ENCODE measurements at regions of chr22 and their contacts with region 1.

Region 1: DNA sequence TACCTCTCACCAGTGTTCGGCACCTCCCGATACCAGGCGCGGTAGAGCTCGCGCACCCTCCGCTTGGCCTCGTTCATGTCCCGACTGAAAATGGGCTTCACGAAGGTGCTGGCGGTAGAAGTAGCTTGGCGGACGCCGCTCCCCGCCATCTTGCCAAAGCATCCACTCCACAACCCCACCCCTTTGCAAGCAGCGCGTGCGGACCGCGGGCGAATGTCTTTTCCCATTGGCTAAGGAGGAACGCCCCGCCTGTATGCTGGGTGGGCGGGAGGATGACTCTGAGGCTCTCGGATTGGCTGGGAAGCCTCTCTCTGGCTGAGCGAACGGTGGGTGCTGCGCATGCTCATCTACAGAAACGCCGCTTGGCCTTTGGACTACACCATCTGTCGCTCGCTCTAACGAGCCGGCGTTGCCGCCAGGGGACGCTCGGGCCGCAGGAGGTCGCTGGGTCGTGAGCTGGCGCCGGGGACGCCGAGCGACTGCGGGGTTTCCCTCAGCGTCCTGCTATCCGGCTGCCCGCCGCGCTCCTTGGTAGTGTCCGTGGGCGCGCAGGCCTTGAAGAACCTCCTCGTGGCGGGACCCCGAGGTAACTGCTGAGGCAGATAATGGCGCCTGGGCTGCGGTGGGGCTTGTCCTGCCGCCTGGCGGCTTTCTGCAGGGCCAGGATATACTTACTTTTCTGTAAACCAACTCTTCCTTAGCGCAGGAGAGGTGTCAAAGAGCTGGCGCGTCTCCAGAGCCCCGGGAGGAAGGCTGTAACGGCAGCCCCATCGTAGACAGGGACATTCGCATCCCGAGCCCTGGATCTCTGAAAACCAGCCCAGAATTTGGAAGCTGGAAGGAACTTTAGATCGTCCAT is at the start of gene NDUFA6:
- DNase-seq: peak; percentile 92 to 99 (median 98)
- ATAC-seq: peak; percentile 93
- H3K4me3 ChIP-seq: peak within 1 kb of the TSS; percentile 96
- H3K4me3 Mint-ChIP-seq: peak within 1 kb of the TSS; percentile 94 to 99 (median 98)
- H3K27ac ChIP-seq: peak within 1 kb of the TSS; percentile 96
- H3K27ac Mint-ChIP-seq: peak within 1 kb of the TSS; percentile 92 to 100 (median 99)
- H3K4me1 ChIP-seq: peaks cover 15 to 22% of the 10 kb centered on the region in 2 donors
- H3K4me1 Mint-ChIP-seq: peaks cover 14 to 56% (median 36%) of the 10 kb centered on the region in 7 donors
- H3K27me3 ChIP-seq: no peaks in the 10 kb centered on the region
- H3K27me3 Mint-ChIP-seq: no peaks in the 10 kb centered on the region
- total RNA-seq, gene NDUFA6: 35.0 to 66.4 (median 40.6) TPM

Region 2: DNA sequence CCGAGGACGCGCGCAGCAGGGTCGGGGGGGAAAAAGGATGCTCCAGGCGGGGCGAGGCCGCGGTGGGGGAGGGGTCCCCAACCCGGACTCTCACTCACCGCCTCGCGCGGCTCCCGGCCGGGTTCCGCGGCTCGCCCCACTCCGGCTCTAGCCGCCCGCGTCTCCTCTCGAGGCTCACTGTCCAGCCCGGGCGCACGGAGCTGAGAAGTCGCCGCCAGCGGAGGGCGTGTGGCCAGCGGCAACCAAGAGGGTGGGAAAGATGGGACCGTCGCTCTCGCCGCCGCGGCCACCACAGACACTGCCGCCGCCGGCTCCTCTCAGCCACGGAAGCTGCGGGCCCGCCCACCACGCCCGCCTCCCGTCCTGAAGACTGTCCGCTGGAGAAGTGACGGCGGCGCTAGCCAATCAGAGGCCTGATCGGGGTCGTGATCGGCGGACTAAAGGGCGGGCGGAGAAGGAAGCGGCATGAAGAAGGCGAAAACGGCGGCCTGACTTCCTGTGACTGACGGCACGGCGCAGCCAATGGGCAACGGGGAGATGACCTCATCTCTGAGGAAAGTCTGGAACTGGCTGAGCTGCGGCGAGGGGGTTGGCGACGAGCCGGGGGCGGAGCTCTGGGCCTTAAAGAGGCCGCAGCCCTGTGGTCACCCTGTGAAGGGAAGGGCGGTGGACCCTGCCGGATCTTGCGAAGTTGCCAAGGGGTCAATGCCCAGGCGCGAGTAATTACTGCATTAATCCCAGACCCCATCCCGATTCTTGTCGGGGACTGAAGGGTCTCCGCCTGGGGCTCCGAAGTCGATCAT is 1454.2 kb before region 1 on chr22 and contains the start of gene MRTFA:
- CTCF ChIA-PET with region 1: no interaction called
- POLR2A ChIA-PET with region 1: no interaction called
- intact Hi-C with region 1: loop called in 1 of 2 experiments (anchors 2 kb)
- DNase-seq: peak; percentile 90 to 99 (median 98)
- ATAC-seq: peak; percentile 96
- H3K4me3 ChIP-seq: peak within 1 kb of the TSS; percentile 84
- H3K4me3 Mint-ChIP-seq: peak within 1 kb of the TSS; percentile 94 to 100 (median 97)
- H3K27ac ChIP-seq: peak within 1 kb of the TSS; percentile 85
- H3K27ac Mint-ChIP-seq: peak within 1 kb of the TSS; percentile 96 to 99 (median 97)
- H3K4me1 ChIP-seq: peaks cover 14 to 27% of the 10 kb centered on the region in 2 donors
- H3K4me1 Mint-ChIP-seq: peaks cover 27 to 56% (median 44%) of the 10 kb centered on the region in 7 donors
- H3K27me3 ChIP-seq: no peaks in the 10 kb centered on the region
- H3K27me3 Mint-ChIP-seq: no peaks in the 10 kb centered on the region
- total RNA-seq, gene MRTFA: 64.0 to 114 (median 104) TPM

Region 3: GRCh38 chr22:41848468-41848867 is 242.4 kb before region 1 on chr22:
- CTCF ChIA-PET with region 1: no interaction called
- POLR2A ChIA-PET with region 1: no interaction called
- intact Hi-C with region 1: no loop called
- DNase-seq: no peak
- ATAC-seq: peak; percentile 79
- H3K4me3 ChIP-seq: no peak overlapping the region
- H3K4me3 Mint-ChIP-seq: no peak overlapping the region
- H3K27ac ChIP-seq: no peak overlapping the region
- H3K27ac Mint-ChIP-seq: peak overlapping the region in 2 of 9 donors; percentile 27 to 51
- H3K4me1 ChIP-seq: peaks cover 4 to 10% of the 10 kb centered on the region in 2 donors
- H3K4me1 Mint-ChIP-seq: peaks cover 32 to 52% (median 47%) of the 10 kb centered on the region in 7 donors
- H3K27me3 ChIP-seq: no peaks in the 10 kb centered on the region
- H3K27me3 Mint-ChIP-seq: no peaks in the 10 kb centered on the region

Region 4: GRCh38 chr22:42070517-42071422 is 20.1 kb before region 1 on chr22 and contains the start of gene NAGA:
- CTCF ChIA-PET with region 1: interaction called, 6 read pairs
- POLR2A ChIA-PET with region 1: interaction called, 21 read pairs
- intact Hi-C with region 1: loop called (anchors 1 kb)
- DNase-seq: peak; percentile 79 to 91 (median 88)
- ATAC-seq: peak; percentile 99
- H3K4me3 ChIP-seq: peak within 1 kb of the TSS; percentile 75
- H3K4me3 Mint-ChIP-seq: peak within 1 kb of the TSS; percentile 86 to 96 (median 94)
- H3K27ac ChIP-seq: peak within 1 kb of the TSS; percentile 75
- H3K27ac Mint-ChIP-seq: peak within 1 kb of the TSS; percentile 81 to 94 (median 92)
- H3K4me1 ChIP-seq: peaks cover 16 to 22% of the 10 kb centered on the region in 2 donors
- H3K4me1 Mint-ChIP-seq: peaks cover 22 to 54% (median 45%) of the 10 kb centered on the region in 7 donors
- H3K27me3 ChIP-seq: no peaks in the 10 kb centered on the region
- H3K27me3 Mint-ChIP-seq: no peaks in the 10 kb centered on the region
- total RNA-seq, gene NAGA: 7.6 to 38.8 (median 9.4) TPM

Region 5: GRCh38 chr22:42169055-42169469 is 78.2 kb after region 1 on chr22:
- CTCF ChIA-PET with region 1: interaction called, 3 read pairs
- POLR2A ChIA-PET with region 1: no interaction called
- intact Hi-C with region 1: loop called in 1 of 2 experiments (anchors 2 kb)
- DNase-seq: peak; percentile 36 to 77 (median 60)
- ATAC-seq: peak; percentile 89
- H3K4me3 ChIP-seq: no peak overlapping the region
- H3K4me3 Mint-ChIP-seq: no peak overlapping the region
- H3K27ac ChIP-seq: no peak overlapping the region
- H3K27ac Mint-ChIP-seq: peak overlapping the region in 1 of 9 donors; percentile 31
- H3K4me1 ChIP-seq: peaks cover 0 to 15% of the 10 kb centered on the region in 2 donors
- H3K4me1 Mint-ChIP-seq: peaks cover 13 to 39% (median 33%) of the 10 kb centered on the region in 7 donors
- H3K27me3 ChIP-seq: no peaks in the 10 kb centered on the region
- H3K27me3 Mint-ChIP-seq: no peaks in the 10 kb centered on the region

Region 6: DNA sequence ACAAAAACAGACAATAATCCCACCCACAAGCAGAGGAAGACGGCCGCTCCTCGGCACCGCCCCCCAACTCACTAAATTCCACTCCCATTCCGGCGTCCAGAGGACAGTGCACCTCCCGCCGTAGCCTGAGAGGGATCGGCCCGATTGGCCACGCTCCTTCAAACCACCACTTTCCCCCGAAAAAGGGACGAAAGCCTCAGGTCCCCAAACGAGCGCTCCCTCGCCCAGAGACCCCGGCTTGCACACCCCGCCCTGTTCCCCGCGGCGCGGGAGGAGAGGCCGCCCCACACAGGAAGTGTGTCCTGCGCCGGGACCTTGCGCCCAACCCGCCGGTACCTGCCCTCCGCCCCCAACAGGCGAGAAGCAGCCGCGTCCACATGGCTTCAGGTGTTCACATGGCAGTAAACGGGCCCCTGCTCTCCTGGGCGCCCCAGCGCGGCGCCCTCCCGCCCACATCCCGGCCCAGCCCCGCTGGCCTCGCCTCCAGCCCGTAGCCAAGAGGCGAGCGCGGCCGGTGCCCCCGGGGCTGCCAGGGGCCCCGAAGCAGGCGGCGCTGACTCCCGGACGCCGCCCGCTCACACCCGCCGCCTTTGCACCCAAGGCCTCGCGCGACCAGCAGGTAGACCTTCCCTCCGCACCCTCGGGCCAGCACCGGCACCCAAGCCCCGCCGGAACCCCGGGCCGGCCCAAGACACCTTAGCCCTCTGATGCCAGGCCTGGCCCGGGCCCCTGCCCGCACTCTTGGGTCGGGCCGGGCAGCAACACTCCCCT is 178.8 kb after region 1 on chr22:
- CTCF ChIA-PET with region 1: interaction called, 3 read pairs
- POLR2A ChIA-PET with region 1: interaction called, 3 read pairs
- intact Hi-C with region 1: loop called (anchors 1 kb)
- DNase-seq: peak; percentile 37 to 74 (median 65)
- ATAC-seq: peak; percentile 64
- H3K4me3 ChIP-seq: peak overlapping the region; percentile 86
- H3K4me3 Mint-ChIP-seq: peak overlapping the region; percentile 86 to 98 (median 92)
- H3K27ac ChIP-seq: peak overlapping the region; percentile 97
- H3K27ac Mint-ChIP-seq: peak overlapping the region; percentile 79 to 95 (median 88)
- H3K4me1 ChIP-seq: peaks cover 28% of the 10 kb centered on the region in 2 donors
- H3K4me1 Mint-ChIP-seq: peaks cover 35 to 56% (median 43%) of the 10 kb centered on the region in 7 donors
- H3K27me3 ChIP-seq: no peaks in the 10 kb centered on the region
- H3K27me3 Mint-ChIP-seq: no peaks in the 10 kb centered on the region

Region 7: DNA sequence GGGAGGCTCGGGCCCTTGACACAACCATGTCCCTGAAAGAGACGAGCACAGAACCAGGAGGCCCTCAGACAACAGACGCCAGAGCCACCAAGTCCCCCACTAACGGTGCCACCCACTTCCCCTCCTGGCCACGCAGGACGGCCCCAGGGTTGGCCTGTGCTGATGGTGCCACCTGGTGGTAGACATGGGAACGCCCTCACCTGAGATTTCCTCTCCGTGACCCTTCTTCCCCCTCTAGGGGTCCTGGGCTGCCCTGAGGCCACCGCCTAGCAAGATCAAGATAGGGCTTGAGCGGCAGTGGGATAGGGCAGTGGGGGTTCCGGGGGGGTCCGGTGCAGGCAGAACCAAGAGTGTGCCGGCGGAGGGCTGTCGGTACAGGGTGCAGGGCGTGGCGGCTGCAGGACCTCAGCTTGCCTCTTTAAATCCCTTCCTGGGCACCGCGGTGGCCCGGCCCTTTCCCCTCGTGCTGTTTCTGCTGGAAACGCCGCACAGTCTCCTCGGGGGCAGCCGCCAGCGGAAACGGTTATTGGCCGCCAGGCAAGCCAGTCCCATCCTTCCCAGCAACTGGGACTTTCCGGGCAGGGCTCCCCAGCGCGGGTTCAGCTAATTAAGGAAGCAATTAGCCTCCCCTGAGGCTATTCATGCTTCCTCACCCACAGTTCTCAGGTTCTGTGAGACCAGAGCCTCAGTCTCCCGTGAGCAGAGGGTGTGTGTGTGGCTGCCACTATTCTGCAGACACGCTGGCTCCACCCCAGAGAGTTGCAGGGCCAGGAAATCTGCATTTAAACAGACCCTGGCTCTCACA is 346.9 kb after region 1 on chr22:
- CTCF ChIA-PET with region 1: interaction called, 10 read pairs
- POLR2A ChIA-PET with region 1: interaction called, 20 read pairs
- intact Hi-C with region 1: loop called (anchors 1 kb)
- DNase-seq: peak; percentile 71 to 90 (median 81)
- ATAC-seq: peak; percentile 96
- H3K4me3 ChIP-seq: peak overlapping the region; percentile 67
- H3K4me3 Mint-ChIP-seq: peak overlapping the region; percentile 65 to 88 (median 74)
- H3K27ac ChIP-seq: no peak overlapping the region
- H3K27ac Mint-ChIP-seq: peak overlapping the region in 4 of 9 donors; percentile 48 to 87 (median 78)
- H3K4me1 ChIP-seq: peaks cover 0 to 7% of the 10 kb centered on the region in 2 donors
- H3K4me1 Mint-ChIP-seq: peaks cover 0 to 33% (median 12%) of the 10 kb centered on the region in 7 donors
- H3K27me3 ChIP-seq: no peaks in the 10 kb centered on the region
- H3K27me3 Mint-ChIP-seq: peaks cover 0 to 11% (median 0%) of the 10 kb centered on the region in 5 donors

Region 8: GRCh38 chr22:42520663-42521546 is 430.1 kb after region 1 on chr22:
- CTCF ChIA-PET with region 1: no interaction called
- POLR2A ChIA-PET with region 1: no interaction called
- intact Hi-C with region 1: loop called in 1 of 2 experiments (anchors 2 kb)
- DNase-seq: no peak
- ATAC-seq: no peak
- H3K4me3 ChIP-seq: no peak overlapping the region
- H3K4me3 Mint-ChIP-seq: peak overlapping the region; percentile 30 to 96 (median 54)
- H3K27ac ChIP-seq: no peak overlapping the region
- H3K27ac Mint-ChIP-seq: peak overlapping the region in 8 of 9 donors; percentile 29 to 97 (median 42)
- H3K4me1 ChIP-seq: peaks cover 0 to 8% of the 10 kb centered on the region in 2 donors
- H3K4me1 Mint-ChIP-seq: peaks cover 5 to 20% (median 13%) of the 10 kb centered on the region in 7 donors
- H3K27me3 ChIP-seq: no peaks in the 10 kb centered on the region
- H3K27me3 Mint-ChIP-seq: no peaks in the 10 kb centered on the region